ENCODE measurements at regions of chr5 and their contacts with region 1.

Region 1: DNA sequence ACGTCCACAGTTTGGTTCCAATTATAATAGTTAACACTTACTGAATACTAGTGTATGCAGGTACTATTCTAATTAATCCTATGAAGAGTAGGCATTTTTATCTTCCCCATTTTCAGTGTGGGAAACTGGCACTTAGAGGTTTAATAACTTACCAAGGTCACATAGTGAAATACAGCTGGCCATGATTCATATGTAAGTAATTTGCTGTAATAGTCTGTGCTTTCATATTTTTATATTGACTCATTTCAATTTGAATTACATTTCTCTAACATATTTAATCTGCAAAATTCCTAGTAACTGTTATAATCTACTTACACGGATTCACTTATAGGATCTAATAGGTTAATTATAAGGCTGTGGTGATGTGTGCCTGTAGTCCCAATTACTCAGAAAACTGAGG is 19.4 kb downstream of the CCNH start:
- DNase-seq: no peak
- H3K4me3 ChIP-seq: no peak overlapping the region
- H3K27ac ChIP-seq: no peak overlapping the region
- H3K4me1 ChIP-seq: no peaks in the 10 kb centered on the region
- H3K27me3 ChIP-seq: no peaks in the 10 kb centered on the region
- CTCF ChIP-seq: no peak

Region 2: DNA sequence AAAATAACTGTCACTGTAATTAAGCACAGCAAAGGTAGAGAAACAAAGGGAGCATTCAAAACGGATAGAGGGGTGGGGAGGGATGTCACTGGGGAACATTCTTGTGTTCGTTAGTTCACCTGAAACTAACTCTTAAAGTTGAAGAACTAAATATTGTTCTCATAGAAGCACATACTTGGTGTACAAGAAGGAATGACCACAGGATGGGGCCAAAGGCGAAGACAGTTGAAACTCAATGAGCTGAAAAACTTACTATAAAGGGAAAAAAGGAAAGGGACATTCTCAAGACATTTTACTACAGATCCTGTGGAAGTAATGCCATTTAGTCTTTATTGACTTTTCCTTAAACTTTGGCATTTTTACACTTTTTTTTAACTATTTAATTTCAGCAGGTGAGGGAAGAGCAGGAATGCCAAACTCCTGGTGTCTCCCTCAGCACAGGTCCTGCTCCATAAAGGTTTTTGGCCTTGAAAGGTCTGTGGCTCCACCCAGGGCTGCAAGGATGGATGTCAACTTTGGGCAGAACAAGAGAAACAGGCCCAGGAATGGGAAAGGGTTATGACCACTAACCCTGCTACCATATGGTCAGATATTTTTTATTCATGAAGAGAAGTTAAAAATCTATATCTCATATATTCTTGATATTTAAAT is 323.2 kb before region 1 on chr5:
- intact Hi-C with region 1: loop called (anchors 5 kb)
- DNase-seq: peak; percentile 24
- H3K4me3 ChIP-seq: no peak overlapping the region
- H3K27ac ChIP-seq: no peak overlapping the region
- H3K4me1 ChIP-seq: no peaks in the 10 kb centered on the region
- H3K27me3 ChIP-seq: no peaks in the 10 kb centered on the region
- CTCF ChIP-seq: peak; percentile 24

Region 3: DNA sequence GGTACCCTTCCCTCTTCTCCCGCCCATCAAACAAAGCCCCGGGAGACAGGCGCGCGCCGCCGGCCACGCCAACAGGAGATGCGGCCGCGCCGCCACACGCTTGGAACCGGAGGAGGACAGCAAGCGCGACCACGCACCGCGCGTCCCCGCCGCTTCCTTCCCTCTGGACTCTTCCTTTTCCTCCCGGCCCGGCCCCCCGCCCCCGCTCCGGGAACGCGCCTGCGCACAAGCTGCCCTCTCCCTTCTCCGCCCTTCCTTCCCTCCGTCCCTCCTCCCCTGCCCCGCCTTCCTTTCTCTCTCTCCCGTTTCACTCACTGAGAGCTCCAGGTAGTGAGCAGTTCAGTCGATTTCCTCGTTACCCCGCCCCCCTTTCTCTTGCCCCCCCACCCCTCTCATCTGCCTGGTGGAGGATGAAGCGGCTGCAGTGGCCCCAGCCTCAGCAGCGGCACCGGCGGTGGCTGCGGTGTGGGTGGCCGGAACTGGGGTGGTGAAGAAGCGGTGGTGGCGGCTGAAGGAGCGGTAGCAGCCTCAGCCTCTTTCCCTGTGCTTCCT is 125.7 kb before region 1 on chr5 and contains the start of gene RASA1:
- intact Hi-C with region 1: loop called (anchors 10 kb)
- DNase-seq: peak; percentile 98
- H3K4me3 ChIP-seq: peak within 1 kb of the TSS; percentile 90
- H3K27ac ChIP-seq: peak within 1 kb of the TSS; percentile 97
- H3K4me1 ChIP-seq: peaks cover 6% of the 10 kb centered on the region
- H3K27me3 ChIP-seq: no peaks in the 10 kb centered on the region
- CTCF ChIP-seq: no peak
- total RNA-seq, gene RASA1: 24.1 to 28.8 TPM

Region 4: DNA sequence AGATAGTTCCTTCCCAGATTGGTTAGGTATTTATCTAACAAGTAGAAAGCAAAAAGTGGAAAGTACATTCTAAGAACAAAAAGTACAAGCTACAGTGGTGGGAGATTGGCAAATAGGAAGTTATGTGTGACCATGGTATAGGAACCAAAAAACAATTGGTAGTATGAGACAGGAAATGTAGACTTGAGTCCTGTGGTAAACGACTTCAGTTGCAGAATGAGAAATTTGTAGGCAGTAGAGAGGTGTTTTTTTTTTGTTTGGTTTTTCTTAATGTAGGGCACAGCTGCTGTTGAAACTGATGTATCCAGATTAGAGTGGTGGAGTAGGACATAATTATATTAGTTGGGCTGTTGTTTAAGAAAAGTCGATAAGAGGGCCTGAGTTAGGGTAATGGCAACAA is 52.6 kb before region 1 on chr5:
- intact Hi-C with region 1: loop called (anchors 10 kb)
- DNase-seq: no peak
- H3K4me3 ChIP-seq: no peak overlapping the region
- H3K27ac ChIP-seq: no peak overlapping the region
- H3K4me1 ChIP-seq: no peaks in the 10 kb centered on the region
- H3K27me3 ChIP-seq: no peaks in the 10 kb centered on the region
- CTCF ChIP-seq: no peak